ENCODE measurements at regions of chr19 and their contacts with region 1.

Region 1: GRCh38 chr19:47523473-47523872 is 8.6 kb upstream of the NAPA start:
- DNase-seq: no peak
- ATAC-seq: no peak

Region 2: DNA sequence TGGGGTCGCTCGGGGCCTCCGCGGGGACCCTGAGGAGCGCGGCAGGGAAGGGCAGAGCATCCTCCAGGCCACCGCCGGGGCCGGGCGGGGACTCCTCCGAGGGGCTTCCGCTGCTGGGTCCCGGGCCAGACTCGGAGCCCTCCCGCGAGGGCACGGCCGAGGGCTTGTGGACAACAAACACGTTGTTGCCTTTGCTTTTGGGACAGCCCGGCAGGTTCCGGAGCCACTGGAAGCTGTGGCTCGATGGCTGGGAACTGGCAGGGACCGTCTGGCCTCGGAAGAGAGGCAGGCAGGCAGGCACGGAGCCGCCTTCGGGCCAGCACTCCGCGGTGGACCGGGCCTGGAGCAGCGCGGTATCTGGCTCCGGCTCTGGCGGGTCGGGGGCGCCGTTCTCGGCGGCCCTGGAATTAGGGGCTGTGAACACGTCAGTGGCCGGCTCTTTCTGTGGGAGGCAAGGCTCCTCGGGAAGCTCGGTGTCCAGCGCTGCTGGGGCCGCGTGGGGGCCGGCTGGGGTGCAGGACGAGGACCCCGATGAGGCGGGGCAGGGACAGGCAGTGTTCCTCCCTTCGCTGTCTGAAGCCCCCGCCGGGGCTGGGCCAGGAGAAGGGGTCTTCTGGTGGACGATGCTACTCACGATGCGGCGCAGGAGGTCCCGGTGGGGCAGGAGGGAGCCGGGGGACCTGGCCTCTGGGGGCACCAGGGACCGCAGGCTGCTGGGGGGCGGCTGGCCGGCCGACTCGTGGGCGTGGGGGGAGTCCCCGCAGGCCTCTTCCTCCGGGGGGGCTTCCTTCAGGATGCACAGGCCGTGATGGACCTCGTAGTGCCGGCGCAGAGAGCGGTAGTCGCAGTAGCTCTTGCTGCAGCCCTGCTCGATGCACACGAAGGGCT is 21.8 kb after region 1 on chr19:
- intact Hi-C with region 1: no loop called
- DNase-seq: no peak
- ATAC-seq: peak; percentile 46 to 50

Region 3: GRCh38 chr19:47697863-47698609 is 174.6 kb after region 1 on chr19:
- intact Hi-C with region 1: loop called in 1 of 2 experiments (anchors 5 kb)
- DNase-seq: peak; percentile 78
- ATAC-seq: peak; percentile 82 to 83